Posterior vena cava (tissue), 2 donors: ENCODE measurements at regions of chr19 and their contacts with region 1.

Region 1: DNA sequence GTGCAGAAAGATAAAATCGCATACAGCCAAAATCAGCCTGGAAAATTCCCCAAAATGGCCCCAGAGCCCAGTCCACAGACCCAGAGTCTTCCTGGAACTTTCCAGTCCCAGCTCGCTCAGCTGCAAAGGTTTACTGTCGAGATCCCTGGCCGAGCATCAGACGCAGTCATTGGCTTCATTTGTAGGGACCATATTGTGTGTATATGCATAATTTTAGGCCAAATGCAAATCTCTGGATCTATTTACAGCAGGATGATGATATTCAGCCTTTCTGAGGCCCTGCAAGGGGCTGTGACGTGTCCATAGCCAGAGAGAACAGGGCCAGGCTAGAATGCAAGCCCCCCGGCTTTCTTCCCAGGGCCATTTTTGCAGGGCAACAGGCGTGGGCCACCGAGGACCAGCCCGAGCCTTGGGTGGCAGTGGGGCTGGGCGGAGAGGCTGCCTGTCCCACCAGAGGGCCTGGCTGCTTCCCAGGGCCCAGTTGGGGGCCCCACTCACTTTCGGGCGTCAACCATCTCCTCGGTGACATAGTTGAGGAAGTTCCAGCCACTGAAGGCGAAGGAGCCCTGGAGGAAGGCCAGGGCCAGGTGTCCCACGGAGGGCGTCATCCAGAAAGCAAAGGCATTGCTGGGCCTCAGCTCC is 13.7 kb downstream of the SLC7A10 start:
- DNase-seq: no peak

Region 2: GRCh38 chr19:33235996-33236350 is 24.1 kb after region 1 on chr19:
- intact Hi-C with region 1: loop called in 1 of 2 experiments (anchors 1 kb)
- DNase-seq: no peak